Activated CD8-positive, alpha-beta memory T cell treated with anti-CD3 and anti-CD28 coated beads, Interleukin-2, amount 10 ng/mL, durations not matched to agents 7 days and 5 days (primary cell): ENCODE measurements at regions of chr19 and their contacts with region 1.

Region 1: GRCh38 chr19:7562646-7563393 is 27.3 kb downstream of the PNPLA6 start:
- DNase-seq: no peak
- ATAC-seq: no peak
- H3K4me3 Mint-ChIP-seq: no peak overlapping the region
- H3K27ac Mint-ChIP-seq: no peak overlapping the region
- H3K4me1 Mint-ChIP-seq: peaks cover 4% of the 10 kb centered on the region
- H3K27me3 Mint-ChIP-seq: no peaks in the 10 kb centered on the region

Region 2: DNA sequence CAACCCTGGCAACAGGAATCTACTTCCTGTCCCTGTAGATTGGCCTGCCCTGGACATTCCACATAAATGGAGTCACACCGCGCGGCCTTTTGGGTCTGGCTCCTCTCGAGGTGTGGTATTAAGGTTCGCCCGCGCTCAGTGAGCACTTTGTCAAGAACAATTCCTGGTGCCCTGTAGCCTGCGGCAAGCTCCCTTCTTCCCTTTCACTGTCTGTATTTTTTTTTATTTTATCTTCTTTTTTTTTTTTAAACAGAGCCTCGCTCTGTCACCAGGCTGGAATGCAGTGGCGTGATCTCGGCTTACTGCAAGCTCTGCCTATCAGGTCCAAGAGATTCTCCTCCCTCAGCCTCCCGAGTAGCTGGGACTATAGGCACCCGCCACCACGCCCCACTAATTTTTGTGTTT is 102.3 kb before region 1 on chr19:
- CTCF ChIA-PET with region 1: no interaction called
- DNase-seq: no peak
- ATAC-seq: no peak
- H3K4me3 Mint-ChIP-seq: no peak overlapping the region
- H3K27ac Mint-ChIP-seq: no peak overlapping the region
- H3K4me1 Mint-ChIP-seq: no peaks in the 10 kb centered on the region
- H3K27me3 Mint-ChIP-seq: no peaks in the 10 kb centered on the region

Region 3: DNA sequence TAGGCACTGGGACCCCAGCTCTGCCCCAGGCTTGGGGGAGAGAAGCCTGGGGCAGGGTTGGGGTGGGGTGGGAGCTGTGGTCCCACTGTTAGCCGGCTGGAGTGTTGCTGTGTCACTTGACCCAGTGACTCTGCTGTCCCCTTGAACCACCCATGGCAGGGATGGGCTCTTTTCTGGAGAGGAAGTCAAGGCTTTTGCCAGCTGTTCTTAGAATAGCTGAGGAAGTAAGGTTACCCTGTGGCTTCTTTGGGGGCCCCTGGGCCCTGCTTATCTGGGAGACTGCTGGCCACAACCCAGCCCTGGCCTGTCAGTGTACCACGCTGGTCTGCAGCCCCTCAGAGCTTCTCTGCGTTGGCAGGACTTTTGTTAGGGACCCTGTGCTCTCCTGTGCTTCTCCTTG is 18.2 kb before region 1 on chr19:
- CTCF ChIA-PET with region 1: interaction called, 14 read pairs
- DNase-seq: peak; percentile 61
- ATAC-seq: peak; percentile 41
- H3K4me3 Mint-ChIP-seq: no peak overlapping the region
- H3K27ac Mint-ChIP-seq: peak overlapping the region; percentile 91
- H3K4me1 Mint-ChIP-seq: peaks cover 47% of the 10 kb centered on the region
- H3K27me3 Mint-ChIP-seq: no peaks in the 10 kb centered on the region

Region 4: GRCh38 chr19:7629347-7630054 is 66.7 kb after region 1 on chr19 and contains the starts of genes PET100 and XAB2:
- CTCF ChIA-PET with region 1: interaction called, 12 read pairs
- DNase-seq: peak; percentile 98
- ATAC-seq: peak; percentile 99
- H3K4me3 Mint-ChIP-seq: peak within 1 kb of the TSS; percentile 97
- H3K27ac Mint-ChIP-seq: peak within 1 kb of the TSS; percentile 99
- H3K4me1 Mint-ChIP-seq: peaks cover 33% of the 10 kb centered on the region
- H3K27me3 Mint-ChIP-seq: no peaks in the 10 kb centered on the region
- total RNA-seq, gene PET100: 132 to 163 TPM
- total RNA-seq, gene XAB2: 43.7 to 51.5 TPM

Region 5: GRCh38 chr19:7789447-7789846 is 226.6 kb after region 1 on chr19:
- CTCF ChIA-PET with region 1: no interaction called
- DNase-seq: no peak
- ATAC-seq: no peak
- H3K4me3 Mint-ChIP-seq: no peak overlapping the region
- H3K27ac Mint-ChIP-seq: no peak overlapping the region
- H3K4me1 Mint-ChIP-seq: no peaks in the 10 kb centered on the region
- H3K27me3 Mint-ChIP-seq: peaks cover 51% of the 10 kb centered on the region

Region 6: GRCh38 chr19:7799640-7800355 is 237.0 kb after region 1 on chr19:
- CTCF ChIA-PET with region 1: interaction called, 22 read pairs
- DNase-seq: peak; percentile 60
- ATAC-seq: no peak
- H3K4me3 Mint-ChIP-seq: no peak overlapping the region
- H3K27ac Mint-ChIP-seq: no peak overlapping the region
- H3K4me1 Mint-ChIP-seq: peaks cover 2% of the 10 kb centered on the region
- H3K27me3 Mint-ChIP-seq: peaks cover 76% of the 10 kb centered on the region